Lower leg skin (tissue), 4 donors: ENCODE measurements at regions of chr6 and their contacts with region 1.

Region 1: GRCh38 chr6:131923356-131923755 is 27.8 kb downstream of the CCN2 start:
- DNase-seq: peak in 1 of 2 donors; percentile 29
- H3K4me3 ChIP-seq: no peak overlapping the region
- CTCF ChIP-seq: no peak
- POLR2A ChIP-seq: no peak

Region 2: DNA sequence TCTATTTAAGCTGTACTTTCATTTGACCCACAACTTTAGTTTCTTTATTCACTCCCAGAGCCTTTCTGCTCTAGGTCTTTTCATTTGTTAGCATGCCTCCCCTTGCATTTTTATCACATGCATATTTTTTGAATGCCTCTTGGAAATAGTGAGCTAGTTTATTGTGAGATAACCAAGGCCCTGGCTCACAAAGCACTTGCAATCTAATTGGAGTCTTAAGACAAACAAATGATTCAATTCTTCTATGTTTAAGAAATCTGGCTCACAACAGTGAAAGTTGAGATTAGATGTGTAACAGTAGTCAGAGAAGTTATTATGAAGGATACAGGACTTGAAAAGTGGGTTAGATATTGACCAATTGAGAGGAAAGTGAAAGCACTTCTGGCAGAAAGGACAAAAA is 304.5 kb after region 1 on chr6:
- intact Hi-C with region 1: loop called (anchors 10 kb)
- DNase-seq: no peak
- H3K4me3 ChIP-seq: no peak overlapping the region
- CTCF ChIP-seq: no peak
- POLR2A ChIP-seq: no peak

Region 3: DNA sequence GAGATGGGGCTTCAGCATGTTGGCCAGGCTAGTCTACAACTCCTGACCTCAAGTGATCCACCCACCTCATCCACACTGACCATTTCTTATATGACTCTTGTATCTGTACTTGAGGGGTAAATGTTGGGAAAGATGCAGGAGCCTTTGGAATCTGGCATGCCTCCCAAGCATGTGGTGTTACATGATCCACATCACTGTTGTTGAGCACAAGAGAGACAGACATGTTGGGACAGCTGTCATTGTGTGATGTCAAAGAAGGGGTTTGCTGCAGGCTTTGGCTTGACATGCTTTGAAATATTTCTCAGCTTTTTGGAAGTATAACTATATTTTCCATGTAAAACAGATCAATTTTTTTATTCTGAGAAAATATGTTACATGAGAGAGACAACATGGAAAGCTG is 338.0 kb after region 1 on chr6:
- intact Hi-C with region 1: loop called (anchors 10 kb)
- DNase-seq: no peak
- H3K4me3 ChIP-seq: no peak overlapping the region
- CTCF ChIP-seq: no peak
- POLR2A ChIP-seq: no peak